ENCODE measurements at regions of chr14 and their contacts with region 1.

Region 1: DNA sequence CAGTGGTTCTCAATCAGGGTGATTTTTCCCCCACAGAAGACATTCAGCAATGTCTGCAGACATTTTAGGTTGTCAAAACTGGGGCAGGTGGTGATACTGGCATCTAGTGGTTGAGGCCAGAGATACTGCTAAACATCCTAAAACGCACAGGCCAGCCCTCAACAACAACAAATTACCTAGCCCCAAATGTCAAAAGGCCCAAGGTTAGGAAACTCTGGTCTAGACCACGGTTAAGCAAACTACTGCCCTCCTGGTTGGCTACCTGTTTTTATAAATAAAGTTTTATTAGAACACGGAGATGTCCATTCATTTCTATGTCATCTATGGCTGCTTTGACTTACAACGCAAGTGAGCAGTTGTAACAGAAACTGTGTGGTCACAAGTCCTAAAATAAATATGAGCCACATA is 186.7 kb downstream of the EFCAB11 start:
- DNase-seq: peak; percentile 86
- H3K4me3 Mint-ChIP-seq: peak overlapping the region; percentile 26
- H3K27ac Mint-ChIP-seq: peak overlapping the region; percentile 74
- H3K4me1 Mint-ChIP-seq: peaks cover 31% of the 10 kb centered on the region
- H3K27me3 Mint-ChIP-seq: no peaks in the 10 kb centered on the region

Region 2: DNA sequence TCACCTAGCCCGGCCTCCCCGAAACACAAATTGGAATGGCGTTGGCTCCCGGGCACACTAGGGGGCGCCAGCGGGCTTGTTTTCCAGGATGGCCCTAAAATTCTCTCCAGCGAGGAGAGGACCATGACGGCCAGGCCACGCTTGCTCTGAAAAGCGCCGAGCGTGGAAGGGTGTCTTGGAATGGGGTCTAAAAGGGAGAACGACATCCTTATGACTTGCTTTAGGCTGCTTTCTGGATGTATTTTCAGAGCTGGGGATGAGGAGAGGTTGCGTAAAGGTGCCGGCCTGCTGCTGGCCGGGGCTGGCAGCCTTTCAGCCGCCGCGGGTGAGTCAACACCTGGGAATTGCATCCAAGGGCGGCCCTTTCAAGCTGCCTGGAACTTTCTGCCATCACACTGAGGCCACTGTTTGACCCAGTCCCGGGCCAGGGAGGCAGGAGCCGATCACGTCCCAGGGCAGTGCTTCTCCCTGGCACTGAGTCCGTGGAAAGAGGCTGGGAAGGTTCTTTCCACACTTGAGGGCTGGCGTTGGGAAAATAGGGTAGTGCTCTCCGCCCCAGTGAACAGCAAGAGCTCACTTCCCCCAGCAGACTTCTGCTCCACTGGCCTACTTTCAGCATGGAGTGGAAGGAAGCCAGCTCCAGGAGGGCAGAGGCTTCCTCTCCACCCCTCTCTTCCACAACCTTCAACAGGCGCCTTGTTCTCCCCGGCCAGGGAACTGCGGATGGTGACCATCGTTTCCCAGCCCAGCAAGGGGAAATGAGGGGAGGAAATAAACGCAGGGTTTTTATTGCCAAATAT is 727.2 kb before region 1 on chr14:
- CTCF ChIA-PET with region 1: interaction called, 9 read pairs
- intact Hi-C with region 1: loop called (anchors 1 kb)
- DNase-seq: peak; percentile 91
- H3K4me3 Mint-ChIP-seq: peak overlapping the region; percentile 70
- H3K27ac Mint-ChIP-seq: no peak overlapping the region
- H3K4me1 Mint-ChIP-seq: peaks cover 12% of the 10 kb centered on the region
- H3K27me3 Mint-ChIP-seq: peaks cover 8% of the 10 kb centered on the region

Region 3: GRCh38 chr14:89240414-89240813 is 527.5 kb before region 1 on chr14:
- CTCF ChIA-PET with region 1: no interaction called
- intact Hi-C with region 1: loop called (anchors 5 kb)
- DNase-seq: no peak
- H3K4me3 Mint-ChIP-seq: no peak overlapping the region
- H3K27ac Mint-ChIP-seq: no peak overlapping the region
- H3K4me1 Mint-ChIP-seq: peaks cover 52% of the 10 kb centered on the region
- H3K27me3 Mint-ChIP-seq: no peaks in the 10 kb centered on the region

Region 4: DNA sequence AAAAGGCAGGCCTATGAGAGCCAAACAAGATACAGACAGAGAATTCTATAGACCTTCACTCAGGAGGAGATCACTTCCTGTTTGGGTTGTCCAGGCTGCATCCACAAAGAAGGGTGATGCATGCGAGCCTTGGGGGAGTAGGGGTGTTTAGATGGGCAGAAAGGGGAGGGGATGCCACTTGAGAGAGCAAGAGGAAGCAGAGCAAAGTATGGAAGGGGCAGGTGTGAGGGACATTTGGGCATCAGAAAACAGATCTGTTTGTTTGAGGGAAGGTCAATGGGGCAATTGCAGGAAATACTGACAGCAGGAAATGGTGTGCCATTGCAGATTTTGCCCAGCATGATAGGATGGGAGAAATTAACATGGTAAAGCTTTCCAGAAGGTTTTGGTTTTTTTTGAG is 204.4 kb before region 1 on chr14:
- CTCF ChIA-PET with region 1: no interaction called
- intact Hi-C with region 1: no loop called
- DNase-seq: no peak
- H3K4me3 Mint-ChIP-seq: no peak overlapping the region
- H3K27ac Mint-ChIP-seq: no peak overlapping the region
- H3K4me1 Mint-ChIP-seq: peaks cover 40% of the 10 kb centered on the region
- H3K27me3 Mint-ChIP-seq: no peaks in the 10 kb centered on the region

Region 5: DNA sequence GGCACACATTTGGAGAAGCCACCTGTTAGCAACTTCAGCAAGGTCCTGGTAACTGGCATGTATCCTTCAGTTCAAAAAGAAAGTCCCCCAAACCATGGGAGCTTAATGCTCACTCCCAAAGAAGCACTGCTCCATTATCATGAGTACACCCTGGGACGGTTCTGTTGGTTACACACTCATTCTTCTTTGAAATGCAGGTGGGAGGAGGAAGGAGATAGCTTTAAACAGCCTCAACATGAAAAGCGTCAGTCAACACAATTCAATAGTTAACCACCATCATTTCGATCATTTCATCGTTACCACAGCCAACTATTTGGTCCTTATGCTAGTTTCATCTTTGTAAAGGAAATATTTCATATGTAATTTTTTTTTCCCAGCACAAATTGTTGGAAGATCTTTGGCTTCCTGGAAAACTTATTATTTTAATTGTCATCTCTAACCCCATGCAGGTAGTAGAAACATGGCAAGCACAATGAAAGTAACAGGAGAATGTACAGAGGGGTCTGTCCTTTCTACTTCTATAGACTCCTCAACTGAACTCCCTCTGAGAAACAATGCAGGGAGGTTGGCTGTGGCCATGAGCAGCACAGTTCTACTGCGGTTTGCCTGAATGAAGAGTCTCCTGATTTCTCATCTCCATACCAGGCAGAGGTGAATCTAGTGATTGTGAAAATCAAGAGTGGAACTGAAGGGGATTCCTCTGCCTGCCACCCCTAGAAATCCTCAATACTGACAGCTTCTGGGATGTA is 154.4 kb before region 1 on chr14:
- CTCF ChIA-PET with region 1: no interaction called
- intact Hi-C with region 1: loop called (anchors 1 kb)
- DNase-seq: peak; percentile 70
- H3K4me3 Mint-ChIP-seq: peak overlapping the region; percentile 46
- H3K27ac Mint-ChIP-seq: peak overlapping the region; percentile 84
- H3K4me1 Mint-ChIP-seq: peaks cover 78% of the 10 kb centered on the region
- H3K27me3 Mint-ChIP-seq: no peaks in the 10 kb centered on the region

Region 6: GRCh38 chr14:89702073-89702875 is 65.6 kb before region 1 on chr14:
- CTCF ChIA-PET with region 1: no interaction called
- intact Hi-C with region 1: no loop called
- DNase-seq: no peak
- H3K4me3 Mint-ChIP-seq: peak overlapping the region; percentile 78
- H3K27ac Mint-ChIP-seq: peak overlapping the region; percentile 74
- H3K4me1 Mint-ChIP-seq: peaks cover 37% of the 10 kb centered on the region
- H3K27me3 Mint-ChIP-seq: no peaks in the 10 kb centered on the region

Measured in activated naive CD4-positive, alpha-beta T cell treated with anti-CD3 and anti-CD28 coated beads for 36 hours (primary cell).